Heart right ventricle (tissue), 16 donors: ENCODE measurements at regions of chr6 and their contacts with region 1.

Region 1: GRCh38 chr6:2634139-2634964 is 116.4 kb downstream of the MYLK4 start:
- DNase-seq: peak; percentile 88
- ATAC-seq: peak; percentile 90 to 94 (median 92)
- H3K4me3 ChIP-seq: peak overlapping the region; percentile 36 to 59 (median 58)
- H3K27ac ChIP-seq: peak overlapping the region; percentile 20 to 94 (median 78)
- H3K4me1 ChIP-seq: peaks cover 2 to 34% (median 22%) of the 10 kb centered on the region in 9 donors
- H3K27me3 ChIP-seq: no peaks in the 10 kb centered on the region
- CTCF ChIP-seq: peak; percentile 96 to 99 (median 99)

Region 2: DNA sequence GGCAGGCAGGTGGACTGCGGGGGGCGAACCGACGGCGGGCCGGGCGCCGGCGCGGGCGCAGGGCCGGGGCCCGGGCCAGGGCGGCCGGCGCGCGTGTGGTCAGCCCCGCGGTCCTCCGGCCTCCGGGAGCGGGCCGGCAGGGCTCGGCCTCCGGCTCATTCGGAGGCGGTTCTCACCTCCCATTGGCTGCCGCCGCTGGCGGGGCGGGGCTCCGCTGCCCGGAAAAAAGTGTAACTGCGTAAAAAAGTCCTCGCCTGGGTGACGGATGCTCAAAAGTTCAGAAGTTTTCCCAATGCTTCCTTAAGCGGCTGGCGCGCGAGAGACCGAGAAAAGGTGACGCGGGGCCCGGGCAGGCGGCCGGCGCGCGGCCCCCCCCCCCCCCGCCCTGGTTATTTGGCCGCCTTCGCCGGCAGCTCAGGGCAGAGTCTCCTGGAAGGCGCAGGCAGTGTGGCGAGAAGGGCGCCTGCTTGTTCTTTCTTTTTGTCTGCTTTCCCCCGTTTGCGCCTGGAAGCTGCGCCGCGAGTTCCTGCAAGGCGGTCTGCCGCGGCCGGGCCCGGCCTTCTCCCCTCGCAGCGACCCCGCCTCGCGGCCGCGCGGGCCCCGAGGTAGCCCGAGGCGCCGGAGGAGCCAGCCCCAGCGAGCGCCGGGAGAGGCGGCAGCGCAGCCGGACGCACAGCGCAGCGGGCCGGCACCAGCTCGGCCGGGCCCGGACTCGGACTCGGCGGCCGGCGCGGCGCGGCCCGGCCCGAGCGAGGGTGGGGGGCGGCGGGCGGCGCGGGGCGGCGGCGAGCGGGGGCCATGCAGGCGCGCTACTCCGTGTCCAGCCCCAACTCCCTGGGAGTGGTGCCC is 1024.5 kb before region 1 on chr6 and contains the start of gene FOXC1:
- intact Hi-C with region 1: loop called in 2 of 10 experiments (anchors 5 kb)
- DNase-seq: peak; percentile 89 to 92
- ATAC-seq: peak; percentile 84 to 95 (median 89)
- H3K4me3 ChIP-seq: peak within 1 kb of the TSS; percentile 53 to 81 (median 70)
- H3K27ac ChIP-seq: peak within 1 kb of the TSS; percentile 83 to 93 (median 91)
- H3K4me1 ChIP-seq: peaks cover 0 to 73% (median 11%) of the 10 kb centered on the region in 9 donors
- H3K27me3 ChIP-seq: peaks cover 14 to 94% (median 76%) of the 10 kb centered on the region in 7 donors
- CTCF ChIP-seq: no peak
- total RNA-seq, gene FOXC1: 2.8 to 7.4 (median 4.3) TPM

Region 3: GRCh38 chr6:2127484-2127911 is 506.9 kb before region 1 on chr6:
- intact Hi-C with region 1: loop called in 1 of 10 experiments (anchors 10 kb)
- DNase-seq: peak; percentile 68 to 74
- ATAC-seq: peak; percentile 73 to 97 (median 90)
- H3K4me3 ChIP-seq: peak overlapping the region in 6 of 10 donors; percentile 17 to 44 (median 33)
- H3K27ac ChIP-seq: peak overlapping the region; percentile 13 to 78 (median 61)
- H3K4me1 ChIP-seq: peaks cover 0 to 34% (median 29%) of the 10 kb centered on the region in 9 donors
- H3K27me3 ChIP-seq: no peaks in the 10 kb centered on the region
- CTCF ChIP-seq: no peak

Region 4: GRCh38 chr6:2215342-2215741 is 419.0 kb before region 1 on chr6:
- intact Hi-C with region 1: loop called in 1 of 10 experiments (anchors 10 kb)
- DNase-seq: no peak
- ATAC-seq: no peak
- H3K4me3 ChIP-seq: no peak overlapping the region
- H3K27ac ChIP-seq: no peak overlapping the region
- H3K4me1 ChIP-seq: peaks cover 0 to 11% (median 0%) of the 10 kb centered on the region in 9 donors
- H3K27me3 ChIP-seq: no peaks in the 10 kb centered on the region
- CTCF ChIP-seq: no peak

Region 5: GRCh38 chr6:2344319-2344905 is 289.9 kb before region 1 on chr6:
- intact Hi-C with region 1: loop called in 1 of 10 experiments (anchors 10 kb)
- DNase-seq: no peak
- ATAC-seq: peak in 2 of 8 donors; percentile 40 to 42
- H3K4me3 ChIP-seq: no peak overlapping the region
- H3K27ac ChIP-seq: no peak overlapping the region
- H3K4me1 ChIP-seq: peaks cover 0 to 19% (median 0%) of the 10 kb centered on the region in 9 donors
- H3K27me3 ChIP-seq: no peaks in the 10 kb centered on the region
- CTCF ChIP-seq: no peak

Region 6: GRCh38 chr6:2448820-2449571 is 185.4 kb before region 1 on chr6:
- intact Hi-C with region 1: loop called in 3 of 10 experiments (anchors 5 to 10 kb)
- DNase-seq: peak in 1 of 2 donors; percentile 36
- ATAC-seq: peak in 5 of 8 donors; percentile 61 to 71 (median 67)
- H3K4me3 ChIP-seq: peak overlapping the region in 5 of 10 donors; percentile 5 to 28 (median 18)
- H3K27ac ChIP-seq: no peak overlapping the region
- H3K4me1 ChIP-seq: peaks cover 0 to 19% (median 10%) of the 10 kb centered on the region in 9 donors
- H3K27me3 ChIP-seq: no peaks in the 10 kb centered on the region
- CTCF ChIP-seq: peak in 8 of 9 donors; percentile 21 to 73 (median 65)

Region 7: DNA sequence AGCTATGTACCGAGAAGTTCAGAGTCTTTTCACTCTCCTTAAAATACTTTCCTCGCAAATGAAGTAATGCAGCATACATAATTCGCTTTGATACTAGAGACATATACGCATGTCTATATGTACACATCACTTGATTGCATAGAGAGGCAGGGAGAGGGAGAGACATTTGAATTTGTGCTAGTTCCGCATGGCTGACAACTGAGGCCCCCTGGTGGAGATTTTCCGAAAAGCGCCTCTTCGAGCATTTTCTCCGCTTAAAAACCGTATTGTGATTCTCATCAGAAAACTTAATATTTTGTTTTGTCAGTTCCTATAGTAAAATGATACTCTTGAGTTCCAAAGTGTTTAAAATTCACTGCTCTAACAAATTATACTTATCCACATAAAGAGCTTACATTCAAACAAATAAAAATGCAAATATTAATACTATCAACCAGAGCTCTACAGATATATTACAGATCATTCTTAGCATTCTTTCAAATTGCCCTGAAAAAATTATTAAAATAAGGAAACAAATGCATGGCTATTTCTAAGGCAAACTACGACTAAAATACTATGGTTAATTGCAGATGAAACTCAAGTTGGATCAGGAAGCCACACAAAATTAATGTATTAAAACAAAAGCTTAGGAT is 115.7 kb after region 1 on chr6:
- intact Hi-C with region 1: loop called in 2 of 10 experiments (anchors 5 to 10 kb)
- DNase-seq: peak; percentile 46 to 60
- ATAC-seq: peak in 4 of 8 donors; percentile 33 to 58 (median 44)
- H3K4me3 ChIP-seq: peak overlapping the region in 6 of 10 donors; percentile 16 to 42 (median 28)
- H3K27ac ChIP-seq: no peak overlapping the region
- H3K4me1 ChIP-seq: peaks cover 0 to 24% (median 14%) of the 10 kb centered on the region in 9 donors
- H3K27me3 ChIP-seq: no peaks in the 10 kb centered on the region
- CTCF ChIP-seq: peak; percentile 82 to 93 (median 90)